Panc1 (cell line): ENCODE measurements at regions of chr6 and their contacts with region 1.

Region 1: DNA sequence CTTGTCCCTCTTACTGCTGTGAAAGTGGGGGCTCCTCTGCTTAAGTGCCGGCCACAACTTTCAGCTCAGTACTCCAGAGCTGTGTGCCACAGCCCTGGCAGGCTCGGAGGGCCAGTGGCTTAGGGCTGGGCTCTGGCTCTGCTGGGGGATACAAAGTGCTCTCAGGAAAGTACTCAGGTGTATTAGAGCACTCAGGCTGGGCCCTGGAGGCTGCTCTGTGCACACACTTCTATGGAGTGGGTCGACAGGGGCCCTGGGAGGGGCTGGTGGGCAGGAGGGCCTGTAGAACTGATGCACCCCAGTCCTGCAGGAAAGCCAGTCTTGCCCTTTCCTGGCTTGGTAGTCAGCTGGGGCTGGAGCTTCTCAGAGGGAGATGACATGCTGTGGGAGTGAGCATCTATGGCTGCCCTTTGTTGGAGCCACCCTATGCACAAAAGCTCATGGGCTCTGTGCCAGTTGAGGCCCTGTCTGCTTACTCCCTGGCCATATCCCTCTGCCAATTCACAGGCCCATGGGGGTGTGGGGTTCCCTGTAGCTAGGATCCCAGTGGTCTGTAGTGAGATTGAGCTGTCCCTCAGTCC is 22.0 kb downstream of the CENPW start:
- DNase-seq: no peak
- ATAC-seq: peak; percentile 56; the same call in 1 of the 2 replicates
- H3K4me3 ChIP-seq: no peak overlapping the region
- H3K27ac ChIP-seq: no peak overlapping the region
- H3K4me1 ChIP-seq: no peaks in the 10 kb centered on the region
- H3K27me3 ChIP-seq: no peaks in the 10 kb centered on the region
- CTCF ChIP-seq: no peak

Region 2: GRCh38 chr6:125858427-125859320 is 503.2 kb before region 1 on chr6:
- CTCF ChIA-PET with region 1: no interaction called
- POLR2A ChIA-PET with region 1: no interaction called
- in situ Hi-C with region 1: no loop called
- intact Hi-C with region 1: no loop called
- DNase-seq: peak; percentile 18
- ATAC-seq: peak; percentile 100
- H3K4me3 ChIP-seq: no peak overlapping the region
- H3K27ac ChIP-seq: no peak overlapping the region
- H3K4me1 ChIP-seq: no peaks in the 10 kb centered on the region
- H3K27me3 ChIP-seq: no peaks in the 10 kb centered on the region
- CTCF ChIP-seq: peak; percentile 94

Region 3: GRCh38 chr6:126657561-126658175 is 295.7 kb after region 1 on chr6:
- CTCF ChIA-PET with region 1: interaction called, 8 read pairs
- POLR2A ChIA-PET with region 1: no interaction called
- in situ Hi-C with region 1: no loop called
- intact Hi-C with region 1: loop called (anchors 2 kb)
- DNase-seq: peak; percentile 22
- ATAC-seq: 0 out of 2 replicates have a peak, but pooled peaks have one; percentile 62
- H3K4me3 ChIP-seq: no peak overlapping the region
- H3K27ac ChIP-seq: no peak overlapping the region
- H3K4me1 ChIP-seq: no peaks in the 10 kb centered on the region
- H3K27me3 ChIP-seq: no peaks in the 10 kb centered on the region
- CTCF ChIP-seq: peak; percentile 65; the same call in 1 of the 2 replicates